ENCODE measurements at regions of chr9 and their contacts with region 1.

Region 1: DNA sequence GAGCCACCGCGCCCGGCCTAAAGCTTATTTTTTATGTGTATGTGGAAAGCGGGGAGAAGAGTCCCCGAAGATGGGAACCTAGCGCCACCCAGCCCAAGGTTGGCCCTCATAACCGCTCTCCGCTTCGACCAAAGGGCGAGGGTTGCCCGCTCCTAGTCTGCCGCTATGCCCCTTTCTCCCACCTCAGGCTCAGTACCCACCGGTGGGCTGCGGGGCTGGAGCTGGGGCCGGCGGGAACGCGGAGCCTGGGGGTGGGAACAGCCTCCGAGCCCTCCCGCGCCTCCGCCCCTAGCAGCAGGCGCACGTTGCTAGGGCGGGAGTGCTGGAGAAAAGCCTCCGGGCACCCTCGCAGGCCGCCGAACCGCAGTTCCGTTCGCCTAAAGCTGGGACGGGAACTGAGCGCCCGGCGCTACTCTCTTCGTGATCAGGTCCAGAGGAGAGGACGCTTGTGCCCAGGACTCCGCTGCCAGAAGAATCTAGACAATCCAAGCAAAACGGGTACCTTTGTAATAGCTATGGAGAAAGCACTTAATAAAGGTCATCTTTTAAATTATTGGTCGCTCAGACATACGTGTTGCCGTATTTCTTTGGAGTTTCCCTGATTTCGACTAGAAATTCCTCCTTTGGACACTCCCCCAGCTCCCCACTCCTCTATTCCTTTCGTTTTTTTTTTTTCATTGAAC is at the start of gene WDR31:
- DNase-seq: peak; percentile 93
- H3K4me3 ChIP-seq: peak within 1 kb of the TSS; percentile 66 to 84 (median 70)
- H3K27ac ChIP-seq: peak within 1 kb of the TSS; percentile 80 to 88 (median 88)
- H3K4me1 ChIP-seq: peaks cover 0 to 38% (median 28%) of the 10 kb centered on the region in 4 donors
- H3K27me3 ChIP-seq: no peaks in the 10 kb centered on the region
- CTCF ChIP-seq: no peak
- EP300 ChIP-seq: no peak
- POLR2A ChIP-seq: peak in 1 of 2 donors; percentile 45
- total RNA-seq, gene WDR31: 1.8 to 3.9 (median 2.6) TPM

Region 2: GRCh38 chr9:113376634-113377567 is 36.7 kb after region 1 on chr9 and contains the start of gene HDHD3:
- intact Hi-C with region 1: loop called (anchors 2 kb)
- DNase-seq: peak; percentile 93
- H3K4me3 ChIP-seq: peak within 1 kb of the TSS; percentile 75 to 89 (median 88)
- H3K27ac ChIP-seq: peak within 1 kb of the TSS; percentile 82 to 86 (median 84)
- H3K4me1 ChIP-seq: peaks cover 0 to 21% (median 12%) of the 10 kb centered on the region in 4 donors
- H3K27me3 ChIP-seq: no peaks in the 10 kb centered on the region
- CTCF ChIP-seq: no peak
- EP300 ChIP-seq: no peak
- POLR2A ChIP-seq: peak; percentile 74 to 87
- total RNA-seq, gene HDHD3: 16.4 to 34.6 (median 25.6) TPM

Region 3: GRCh38 chr9:113581865-113582697 is 241.9 kb after region 1 on chr9:
- intact Hi-C with region 1: loop called (anchors 10 kb)
- DNase-seq: peak; percentile 91
- H3K4me3 ChIP-seq: peak overlapping the region in 3 of 4 donors; percentile 13 to 32 (median 30)
- H3K27ac ChIP-seq: peak overlapping the region; percentile 73 to 85 (median 84)
- H3K4me1 ChIP-seq: peaks cover 0 to 59% (median 51%) of the 10 kb centered on the region in 4 donors
- H3K27me3 ChIP-seq: no peaks in the 10 kb centered on the region
- CTCF ChIP-seq: peak in 3 of 4 experiments; percentile 14 to 38 (median 19)
- EP300 ChIP-seq: no peak
- POLR2A ChIP-seq: no peak